ENCODE measurements at regions of chr4 and their contacts with region 1.

Region 1: GRCh38 chr4:56843421-56843899 is 22.0 kb upstream of the SPINK2 start:
- DNase-seq: no peak
- H3K4me3 ChIP-seq: no peak overlapping the region
- H3K27ac ChIP-seq: no peak overlapping the region
- H3K4me1 ChIP-seq: no peaks in the 10 kb centered on the region
- H3K27me3 ChIP-seq: no peaks in the 10 kb centered on the region
- CTCF ChIP-seq: peak in 1 of 2 donors; percentile 10

Region 2: DNA sequence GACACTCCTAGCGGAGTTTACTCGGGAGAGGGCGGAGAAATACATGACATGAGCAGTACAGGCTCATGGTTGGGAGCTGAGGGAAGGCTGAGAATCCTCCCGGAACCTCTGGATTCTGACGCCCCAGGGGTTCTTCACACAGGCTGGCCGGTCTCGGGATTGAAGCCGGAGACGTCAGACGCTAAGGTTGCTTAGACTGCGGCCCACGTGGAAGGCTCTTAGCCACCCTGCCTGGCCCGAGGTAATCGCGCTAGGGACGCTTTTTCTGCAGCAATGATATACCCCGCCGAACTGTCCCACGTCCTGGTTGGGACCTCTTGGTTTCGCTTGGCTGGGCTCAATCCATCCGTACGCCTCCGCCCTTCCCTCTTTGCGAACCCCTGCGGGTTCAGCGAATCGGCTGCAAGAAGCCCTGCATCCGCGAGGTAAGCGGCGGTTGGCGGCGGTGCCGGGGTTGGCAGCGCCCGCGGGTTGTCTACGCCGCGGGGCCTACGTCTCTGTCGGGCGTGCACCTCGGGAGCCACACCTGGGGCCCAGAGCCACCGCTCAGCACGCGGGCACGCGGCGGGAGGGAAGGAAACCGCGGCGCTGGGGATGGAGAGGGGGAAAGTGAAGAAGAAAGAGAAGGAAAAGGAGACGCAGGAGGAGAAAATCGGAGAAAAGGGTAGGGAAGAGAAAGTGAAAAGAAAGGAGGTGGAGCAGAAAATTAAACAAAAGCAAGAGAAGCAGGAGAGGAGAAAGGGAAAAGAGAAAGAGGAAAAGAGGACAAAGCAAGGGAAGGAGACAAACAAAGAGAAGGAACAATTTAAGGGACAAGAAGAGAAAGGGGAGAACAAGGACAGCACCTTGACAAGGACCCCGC is 338.0 kb before region 1 on chr4 and contains the start of gene ARL9:
- CTCF ChIA-PET with region 1: no interaction called
- dilution Hi-C with region 1: no loop called
- in situ Hi-C with region 1: no loop called
- intact Hi-C with region 1: loop called (anchors 5 kb)
- DNase-seq: peak; percentile 45
- H3K4me3 ChIP-seq: peak within 1 kb of the TSS; percentile 33 to 50 (median 40)
- H3K27ac ChIP-seq: no peak within 1 kb of the TSS
- H3K4me1 ChIP-seq: peaks cover 12% of the 10 kb centered on the region
- H3K27me3 ChIP-seq: no peaks in the 10 kb centered on the region
- CTCF ChIP-seq: no peak
- total RNA-seq, gene ARL9: 0.17 to 0.42 TPM

Region 3: DNA sequence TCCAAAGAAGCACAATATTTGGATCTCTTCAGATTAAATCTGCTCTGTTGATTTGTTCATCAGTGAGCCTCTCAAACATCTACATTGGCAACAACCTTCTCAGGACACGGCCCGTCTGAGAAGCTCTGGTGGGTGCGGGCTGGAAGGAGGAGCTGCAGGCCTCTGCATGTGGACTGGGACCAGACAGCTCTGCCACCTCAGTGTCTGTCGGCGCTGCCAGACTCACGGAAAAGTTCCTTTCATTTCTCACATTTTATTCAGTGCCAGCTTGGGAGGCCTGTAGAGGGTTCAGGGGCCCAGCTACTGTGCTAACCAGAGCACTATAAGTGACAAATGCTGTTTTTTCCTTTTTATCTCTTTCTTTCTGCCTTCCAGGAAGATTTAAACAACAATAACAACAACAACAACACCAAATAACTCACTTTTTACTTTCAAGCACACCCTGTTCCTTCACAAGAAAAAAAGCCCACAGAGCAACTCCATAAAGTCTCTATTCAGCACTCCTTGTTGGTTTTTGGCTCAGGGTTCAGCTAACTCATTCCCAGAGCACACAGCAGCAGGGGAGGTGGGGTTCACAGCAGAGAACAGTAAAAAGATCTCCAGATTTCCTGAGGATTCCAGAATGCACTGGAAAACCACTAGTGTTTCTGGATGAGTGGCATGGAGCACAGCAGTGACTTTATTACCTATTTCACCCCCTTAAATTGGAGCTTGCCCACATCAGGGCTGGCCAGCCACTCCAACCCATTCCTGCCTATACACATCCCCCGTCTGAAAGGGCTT is 139.2 kb before region 1 on chr4:
- CTCF ChIA-PET with region 1: no interaction called
- dilution Hi-C with region 1: no loop called
- in situ Hi-C with region 1: no loop called
- intact Hi-C with region 1: no loop called
- DNase-seq: no peak
- H3K4me3 ChIP-seq: no peak overlapping the region
- H3K27ac ChIP-seq: no peak overlapping the region
- H3K4me1 ChIP-seq: no peaks in the 10 kb centered on the region
- H3K27me3 ChIP-seq: no peaks in the 10 kb centered on the region
- CTCF ChIP-seq: no peak

Region 4: GRCh38 chr4:57094832-57095223 is 251.4 kb after region 1 on chr4:
- CTCF ChIA-PET with region 1: no interaction called
- dilution Hi-C with region 1: no loop called
- in situ Hi-C with region 1: no loop called
- intact Hi-C with region 1: no loop called
- DNase-seq: peak; percentile 34
- H3K4me3 ChIP-seq: no peak overlapping the region
- H3K27ac ChIP-seq: no peak overlapping the region
- H3K4me1 ChIP-seq: peaks cover 12% of the 10 kb centered on the region
- H3K27me3 ChIP-seq: no peaks in the 10 kb centered on the region
- CTCF ChIP-seq: no peak

Measured in mammary epithelial cell (primary cell).